Right lobe of liver (tissue), 6 donors: ENCODE measurements at regions of chr3 and their contacts with region 1.

Region 1: GRCh38 chr3:58052373-58053273 is 44.4 kb downstream of the FLNB start:
- DNase-seq: peak; percentile 84 to 88 (median 86)
- ATAC-seq: peak; percentile 67 to 79 (median 76)
- H3K4me3 ChIP-seq: no peak overlapping the region
- H3K27ac ChIP-seq: peak overlapping the region; percentile 78 to 91 (median 83)
- H3K4me1 ChIP-seq: peaks cover 0 to 61% (median 24%) of the 10 kb centered on the region in 4 donors
- H3K27me3 ChIP-seq: no peaks in the 10 kb centered on the region
- CTCF ChIP-seq: no peak
- POLR2A ChIP-seq: no peak

Region 2: DNA sequence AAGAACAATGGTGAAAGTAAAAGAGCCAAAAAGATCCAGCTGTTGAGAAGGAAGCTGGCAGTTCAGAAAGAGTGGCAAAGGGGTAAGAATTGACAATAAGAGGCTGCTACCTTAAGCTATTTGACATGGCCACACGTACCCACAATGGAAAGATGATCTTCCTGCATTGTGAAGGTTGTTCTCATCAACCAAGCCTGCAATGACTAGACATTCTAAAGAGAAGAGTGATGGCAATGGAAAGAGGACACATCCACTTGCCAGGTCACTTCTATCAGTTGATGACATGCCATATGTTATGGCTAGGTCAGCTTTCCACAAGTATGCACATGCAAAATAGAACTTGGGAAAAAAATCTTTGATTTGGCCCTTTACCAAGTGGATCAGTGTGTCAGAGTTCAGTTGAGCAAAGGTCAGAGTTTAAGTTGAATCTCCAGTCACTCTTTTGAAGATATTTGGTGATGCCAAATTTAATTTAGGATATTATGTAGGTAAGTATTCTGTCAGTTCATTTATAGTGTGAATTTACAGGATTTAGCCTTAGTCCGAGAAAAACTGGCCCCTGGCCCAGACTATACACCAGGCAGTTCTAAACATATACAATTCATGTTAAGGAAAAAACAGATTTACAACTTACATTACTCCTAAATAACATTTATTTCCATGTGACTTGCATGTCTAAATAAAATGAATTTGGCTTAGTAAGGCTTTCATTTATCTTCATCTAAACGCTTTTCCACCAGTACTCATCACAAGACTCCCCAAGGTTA is 149.3 kb before region 1 on chr3:
- intact Hi-C with region 1: no loop called
- DNase-seq: no peak
- ATAC-seq: peak; percentile 44 to 69 (median 54)
- H3K4me3 ChIP-seq: no peak overlapping the region
- H3K27ac ChIP-seq: no peak overlapping the region
- H3K4me1 ChIP-seq: peaks cover 0 to 8% (median 4%) of the 10 kb centered on the region in 4 donors
- H3K27me3 ChIP-seq: no peaks in the 10 kb centered on the region
- CTCF ChIP-seq: no peak
- POLR2A ChIP-seq: no peak

Region 3: DNA sequence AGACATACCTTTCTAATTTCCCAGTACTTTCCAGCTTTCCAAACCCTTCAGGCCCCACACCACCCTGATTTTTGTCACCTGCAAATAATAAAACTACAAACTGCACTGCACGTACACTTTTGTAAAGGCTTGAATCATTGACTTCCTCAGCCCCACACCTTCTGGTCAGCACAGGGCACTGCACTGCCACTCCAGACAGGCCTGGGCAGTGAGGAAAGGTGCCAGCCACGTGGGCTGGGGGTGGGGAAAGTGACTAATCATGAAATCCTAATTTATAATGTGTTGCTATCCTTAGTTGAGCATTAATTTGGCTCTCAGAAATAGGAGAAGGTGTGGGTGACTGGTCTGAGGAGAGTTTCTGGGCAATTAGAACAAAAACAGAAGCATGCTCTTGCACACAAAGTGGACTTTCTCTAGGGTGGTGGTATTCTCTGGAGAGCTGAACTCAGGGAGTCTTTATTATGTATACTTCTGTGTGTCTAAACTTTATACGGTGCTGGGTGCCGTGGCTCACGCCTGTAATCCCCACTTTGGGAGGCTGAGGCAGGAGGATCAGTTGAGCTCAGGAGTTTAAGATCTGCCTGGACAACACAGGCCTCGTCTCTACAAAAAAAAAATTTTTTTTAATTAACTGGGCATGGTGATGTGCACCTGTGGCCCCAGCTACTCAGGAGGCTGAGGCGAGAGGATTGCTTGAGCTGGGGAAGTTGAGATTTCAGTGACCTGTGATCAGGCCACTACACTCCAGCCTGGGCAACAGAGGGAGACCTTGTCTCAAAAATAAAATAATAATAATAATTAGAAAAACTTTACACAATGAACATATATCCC is 102.6 kb before region 1 on chr3:
- intact Hi-C with region 1: no loop called
- DNase-seq: peak in 1 of 3 donors; percentile 40
- ATAC-seq: peak in 2 of 4 donors; percentile 18 to 59
- H3K4me3 ChIP-seq: no peak overlapping the region
- H3K27ac ChIP-seq: no peak overlapping the region
- H3K4me1 ChIP-seq: peaks cover 0 to 4% (median 0%) of the 10 kb centered on the region in 4 donors
- H3K27me3 ChIP-seq: no peaks in the 10 kb centered on the region
- CTCF ChIP-seq: peak in 1 of 4 donors; percentile 32
- POLR2A ChIP-seq: no peak

Region 4: GRCh38 chr3:57974796-57975388 is 77.7 kb before region 1 on chr3:
- intact Hi-C with region 1: no loop called
- DNase-seq: no peak
- ATAC-seq: peak; percentile 64 to 80 (median 71)
- H3K4me3 ChIP-seq: no peak overlapping the region
- H3K27ac ChIP-seq: no peak overlapping the region
- H3K4me1 ChIP-seq: no peaks in the 10 kb centered on the region
- H3K27me3 ChIP-seq: no peaks in the 10 kb centered on the region
- CTCF ChIP-seq: no peak
- POLR2A ChIP-seq: no peak

Region 5: DNA sequence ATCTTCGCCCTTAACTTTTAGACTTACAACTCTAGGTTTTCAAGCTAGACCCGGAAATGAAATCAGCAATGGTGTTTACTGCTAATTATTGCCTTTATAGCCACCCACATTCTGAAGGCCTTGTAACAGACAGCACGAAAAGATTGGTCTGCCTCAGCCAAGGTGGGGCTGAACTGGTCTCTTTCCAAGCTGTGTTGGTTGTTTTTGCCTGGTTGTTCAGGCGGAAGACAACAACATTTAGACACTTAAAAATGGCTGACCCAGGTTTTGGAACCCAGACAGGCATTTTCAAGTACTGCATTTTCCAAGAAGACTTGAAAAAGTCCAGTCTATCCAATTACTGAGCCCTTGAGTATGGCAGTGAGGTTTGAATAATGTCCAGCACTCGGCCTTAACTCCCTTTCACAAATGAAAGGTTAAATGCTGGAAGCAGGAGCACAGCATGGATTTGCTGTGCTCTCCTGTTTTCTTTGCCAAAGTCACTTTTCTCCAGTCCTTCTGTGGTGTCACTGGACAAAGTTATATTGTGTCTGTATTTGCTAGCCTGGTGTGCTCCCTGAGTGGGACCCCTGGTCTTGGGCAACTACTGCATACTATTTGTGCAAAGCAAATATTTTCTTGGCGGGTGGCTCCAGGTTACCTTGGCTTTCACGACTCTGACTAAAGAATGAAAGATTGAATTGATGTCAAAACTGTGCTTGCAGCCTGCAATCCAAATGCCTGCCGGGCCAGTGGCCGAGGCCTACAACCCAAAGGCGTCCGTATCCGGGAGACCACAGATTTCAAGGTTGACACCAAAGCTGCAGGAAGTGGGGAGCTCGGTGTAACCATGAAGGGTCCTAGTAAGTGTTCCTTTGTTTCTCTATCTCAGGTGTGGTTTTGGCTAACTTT is 49.1 kb after region 1 on chr3:
- intact Hi-C with region 1: loop called in 1 of 2 experiments (anchors 10 kb)
- DNase-seq: peak; percentile 52 to 91 (median 81)
- ATAC-seq: peak; percentile 75 to 89 (median 80)
- H3K4me3 ChIP-seq: peak overlapping the region in 1 of 3 donors; percentile 3
- H3K27ac ChIP-seq: peak overlapping the region; percentile 24 to 84 (median 82)
- H3K4me1 ChIP-seq: peaks cover 0 to 44% (median 21%) of the 10 kb centered on the region in 4 donors
- H3K27me3 ChIP-seq: no peaks in the 10 kb centered on the region
- CTCF ChIP-seq: no peak
- POLR2A ChIP-seq: no peak

Region 6: GRCh38 chr3:58135712-58136543 is 83.3 kb after region 1 on chr3:
- intact Hi-C with region 1: no loop called
- DNase-seq: no peak
- ATAC-seq: no peak
- H3K4me3 ChIP-seq: no peak overlapping the region
- H3K27ac ChIP-seq: no peak overlapping the region
- H3K4me1 ChIP-seq: peaks cover 0 to 11% (median 2%) of the 10 kb centered on the region in 4 donors
- H3K27me3 ChIP-seq: no peaks in the 10 kb centered on the region
- CTCF ChIP-seq: peak in 3 of 4 donors; percentile 21 to 34 (median 24)
- POLR2A ChIP-seq: no peak